ENCODE measurements at regions of chr15 and their contacts with region 1.

Region 1: GRCh38 chr15:59917504-59918157 is 86.5 kb upstream of the FOXB1 start:
- DNase-seq: peak; percentile 60
- H3K4me3 ChIP-seq: no peak overlapping the region
- H3K27ac ChIP-seq: no peak overlapping the region
- H3K4me1 ChIP-seq: peaks cover 9% of the 10 kb centered on the region
- H3K27me3 ChIP-seq: no peaks in the 10 kb centered on the region
- CTCF ChIP-seq: peak; percentile 74 to 79

Region 2: GRCh38 chr15:59688841-59689625 is 228.6 kb before region 1 on chr15 and contains the start of gene BNIP2:
- CTCF ChIA-PET with region 1: no interaction called
- dilution Hi-C with region 1: no loop called
- in situ Hi-C with region 1: no loop called
- intact Hi-C with region 1: loop called (anchors 1 kb)
- DNase-seq: peak; percentile 97
- H3K4me3 ChIP-seq: peak within 1 kb of the TSS; percentile 80 to 97 (median 91)
- H3K27ac ChIP-seq: peak within 1 kb of the TSS; percentile 92
- H3K4me1 ChIP-seq: peaks cover 23% of the 10 kb centered on the region
- H3K27me3 ChIP-seq: no peaks in the 10 kb centered on the region
- CTCF ChIP-seq: no peak
- total RNA-seq, gene BNIP2: 78.2 to 107 TPM

Region 3: GRCh38 chr15:59751552-59752413 is 165.8 kb before region 1 on chr15:
- CTCF ChIA-PET with region 1: no interaction called
- dilution Hi-C with region 1: no loop called
- in situ Hi-C with region 1: no loop called
- intact Hi-C with region 1: loop called (anchors 5 kb)
- DNase-seq: peak; percentile 41
- H3K4me3 ChIP-seq: no peak overlapping the region
- H3K27ac ChIP-seq: no peak overlapping the region
- H3K4me1 ChIP-seq: no peaks in the 10 kb centered on the region
- H3K27me3 ChIP-seq: no peaks in the 10 kb centered on the region
- CTCF ChIP-seq: peak; percentile 48 to 62

Region 4: DNA sequence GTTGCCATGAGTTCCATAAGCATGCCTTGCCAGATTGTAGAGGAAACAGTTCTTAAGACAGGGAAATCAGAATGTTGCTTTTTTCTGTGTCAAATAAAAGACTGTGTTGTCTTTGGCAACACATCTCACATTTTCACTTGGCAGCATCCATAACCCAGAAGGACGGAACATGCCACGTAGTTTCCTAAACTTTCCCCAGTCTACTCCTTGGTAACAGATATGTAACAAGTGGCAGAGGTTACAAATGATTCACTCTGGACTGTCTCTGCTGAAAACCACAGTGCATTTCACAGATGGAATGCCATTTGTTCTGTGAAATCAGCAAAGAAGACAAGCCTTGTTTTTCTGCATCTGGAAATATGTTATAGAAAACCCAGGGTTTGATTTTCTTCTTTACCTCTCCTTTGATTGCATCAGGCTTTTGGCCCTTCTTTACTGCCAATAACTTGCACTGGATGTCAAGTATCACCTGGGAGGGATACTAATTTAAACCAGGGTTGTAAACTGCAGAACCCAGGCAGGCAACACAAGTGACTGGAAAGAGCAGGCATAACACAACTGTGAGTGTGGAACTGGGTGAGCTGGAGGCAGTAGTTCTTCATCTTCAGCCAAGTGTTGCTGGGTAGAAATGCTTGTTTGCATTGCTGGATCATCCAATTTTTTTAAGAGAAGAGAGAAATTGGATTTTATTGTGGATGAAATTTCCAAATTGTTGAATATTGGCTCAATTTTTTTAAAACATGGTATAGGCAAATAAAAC is 37.9 kb before region 1 on chr15:
- CTCF ChIA-PET with region 1: no interaction called
- dilution Hi-C with region 1: no loop called
- in situ Hi-C with region 1: no loop called
- intact Hi-C with region 1: no loop called
- DNase-seq: peak; percentile 89
- H3K4me3 ChIP-seq: no peak overlapping the region
- H3K27ac ChIP-seq: no peak overlapping the region
- H3K4me1 ChIP-seq: peaks cover 15% of the 10 kb centered on the region
- H3K27me3 ChIP-seq: no peaks in the 10 kb centered on the region
- CTCF ChIP-seq: no peak

Region 5: GRCh38 chr15:59997070-59997701 is 79.6 kb after region 1 on chr15:
- CTCF ChIA-PET with region 1: no interaction called
- dilution Hi-C with region 1: no loop called
- in situ Hi-C with region 1: no loop called
- intact Hi-C with region 1: loop called (anchors 2 kb)
- DNase-seq: peak; percentile 38
- H3K4me3 ChIP-seq: no peak overlapping the region
- H3K27ac ChIP-seq: no peak overlapping the region
- H3K4me1 ChIP-seq: peaks cover 8% of the 10 kb centered on the region
- H3K27me3 ChIP-seq: peaks cover 91% of the 10 kb centered on the region
- CTCF ChIP-seq: peak in 1 of 2 donors; percentile 32